A673 (cell line): ENCODE measurements at regions of chr12 and their contacts with region 1.

Region 1: GRCh38 chr12:22974865-22975264 is 349.9 kb downstream of the ETNK1 start:
- DNase-seq: peak; percentile 35
- H3K4me3 ChIP-seq: no peak overlapping the region
- H3K27ac ChIP-seq: no peak overlapping the region
- H3K4me1 ChIP-seq: no peaks in the 10 kb centered on the region
- H3K27me3 ChIP-seq: peaks cover 66% of the 10 kb centered on the region
- CTCF ChIP-seq: no peak

Region 2: GRCh38 chr12:22551624-22552023 is 423.2 kb before region 1 on chr12:
- CTCF ChIA-PET with region 1: no interaction called
- POLR2A ChIA-PET with region 1: no interaction called
- intact Hi-C with region 1: no loop called
- DNase-seq: no peak
- H3K4me3 ChIP-seq: no peak overlapping the region
- H3K27ac ChIP-seq: no peak overlapping the region
- H3K4me1 ChIP-seq: no peaks in the 10 kb centered on the region
- H3K27me3 ChIP-seq: no peaks in the 10 kb centered on the region
- CTCF ChIP-seq: no peak

Region 3: GRCh38 chr12:22797701-22798100 is 177.2 kb before region 1 on chr12:
- CTCF ChIA-PET with region 1: no interaction called
- POLR2A ChIA-PET with region 1: interaction called, 26 read pairs
- intact Hi-C with region 1: no loop called
- DNase-seq: no peak
- H3K4me3 ChIP-seq: no peak overlapping the region
- H3K27ac ChIP-seq: no peak overlapping the region
- H3K4me1 ChIP-seq: no peaks in the 10 kb centered on the region
- H3K27me3 ChIP-seq: no peaks in the 10 kb centered on the region
- CTCF ChIP-seq: no peak

Region 4: GRCh38 chr12:22932431-22932830 is 42.4 kb before region 1 on chr12:
- CTCF ChIA-PET with region 1: no interaction called
- POLR2A ChIA-PET with region 1: no interaction called
- intact Hi-C with region 1: loop called (anchors 5 kb)
- DNase-seq: no peak
- H3K4me3 ChIP-seq: no peak overlapping the region
- H3K27ac ChIP-seq: no peak overlapping the region
- H3K4me1 ChIP-seq: peaks cover 17% of the 10 kb centered on the region
- H3K27me3 ChIP-seq: peaks cover 72% of the 10 kb centered on the region
- CTCF ChIP-seq: no peak